Head of caudate nucleus (tissue), 42 donors: ENCODE measurements at regions of chr15 and their contacts with region 1.

Region 1: GRCh38 chr15:59372352-59373211 is at the start of gene MYO1E:
- DNase-seq: peak; percentile 75 to 97 (median 93)

Region 2: DNA sequence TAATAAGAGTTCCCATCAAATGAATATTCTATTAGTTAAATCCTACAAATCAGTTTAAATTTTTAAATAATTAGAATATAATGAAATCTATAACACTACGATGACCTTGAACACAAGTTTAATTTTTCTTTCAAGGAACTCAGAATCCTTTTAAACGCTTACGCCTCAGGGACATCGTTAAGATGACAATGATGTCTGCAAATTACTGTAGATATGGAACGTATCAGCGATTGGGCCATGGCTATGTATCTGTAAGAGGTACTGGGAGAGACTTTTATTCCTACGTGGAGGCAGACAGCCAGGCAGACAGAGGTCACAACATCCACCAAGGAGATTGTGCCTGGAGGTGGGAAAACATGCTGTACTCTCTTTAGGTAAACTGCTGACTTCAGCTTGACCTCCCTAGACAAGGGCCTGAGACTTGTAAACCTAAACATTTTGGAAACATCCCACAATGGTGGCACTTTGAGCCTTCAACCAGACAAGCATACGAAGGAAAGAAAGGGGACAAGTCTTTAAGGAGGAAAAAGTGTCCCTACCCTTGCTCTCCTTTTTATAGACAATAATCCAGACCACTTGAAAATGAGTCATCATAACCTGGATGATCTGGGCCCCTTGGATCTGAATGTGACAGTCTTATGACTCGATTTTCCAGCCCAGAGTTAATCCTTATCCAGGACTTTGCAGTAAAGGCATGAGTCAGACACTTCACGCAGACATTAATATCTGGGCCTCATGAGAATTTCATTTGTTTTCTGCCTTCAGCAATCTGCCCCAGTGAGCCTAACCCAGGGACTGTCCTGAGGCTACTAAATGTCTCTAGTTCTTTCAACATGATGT is 172.7 kb before region 1 on chr15:
- intact Hi-C with region 1: loop called (anchors 10 kb)
- DNase-seq: no peak

Region 3: DNA sequence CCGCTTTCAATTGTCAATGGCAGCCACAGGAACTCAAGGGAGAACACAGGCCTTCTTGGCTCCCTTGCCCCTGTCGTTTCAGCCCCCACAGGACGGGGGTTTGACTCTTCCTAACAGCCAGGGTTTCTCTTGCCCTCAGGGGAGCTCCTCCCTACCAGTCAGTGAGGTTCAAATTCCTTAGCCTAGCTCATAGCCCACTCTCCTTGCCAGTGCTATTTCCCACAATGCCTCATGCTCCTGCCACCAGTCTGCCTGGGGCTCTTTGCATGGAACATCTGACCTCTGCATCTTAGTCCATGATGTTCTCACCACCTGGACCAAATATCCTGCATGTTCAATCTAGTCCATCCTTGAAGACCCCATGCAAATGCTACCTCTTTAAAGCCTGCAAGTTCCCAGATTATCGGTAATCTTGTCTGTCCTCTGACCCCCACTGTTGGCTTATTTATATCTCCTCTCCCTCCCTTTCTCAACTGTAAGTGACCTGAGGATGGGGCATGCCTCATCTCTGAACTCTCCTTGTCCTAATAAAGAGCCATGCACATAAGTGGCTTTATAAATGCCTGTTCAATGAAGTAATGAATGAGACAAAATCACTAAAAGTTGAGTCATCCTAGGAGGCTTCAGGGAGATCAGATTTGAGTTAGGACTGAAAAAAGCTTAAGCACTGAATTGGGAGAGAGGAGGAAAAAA is 77.9 kb before region 1 on chr15:
- intact Hi-C with region 1: loop called (anchors 5 kb)
- DNase-seq: no peak

Region 4: DNA sequence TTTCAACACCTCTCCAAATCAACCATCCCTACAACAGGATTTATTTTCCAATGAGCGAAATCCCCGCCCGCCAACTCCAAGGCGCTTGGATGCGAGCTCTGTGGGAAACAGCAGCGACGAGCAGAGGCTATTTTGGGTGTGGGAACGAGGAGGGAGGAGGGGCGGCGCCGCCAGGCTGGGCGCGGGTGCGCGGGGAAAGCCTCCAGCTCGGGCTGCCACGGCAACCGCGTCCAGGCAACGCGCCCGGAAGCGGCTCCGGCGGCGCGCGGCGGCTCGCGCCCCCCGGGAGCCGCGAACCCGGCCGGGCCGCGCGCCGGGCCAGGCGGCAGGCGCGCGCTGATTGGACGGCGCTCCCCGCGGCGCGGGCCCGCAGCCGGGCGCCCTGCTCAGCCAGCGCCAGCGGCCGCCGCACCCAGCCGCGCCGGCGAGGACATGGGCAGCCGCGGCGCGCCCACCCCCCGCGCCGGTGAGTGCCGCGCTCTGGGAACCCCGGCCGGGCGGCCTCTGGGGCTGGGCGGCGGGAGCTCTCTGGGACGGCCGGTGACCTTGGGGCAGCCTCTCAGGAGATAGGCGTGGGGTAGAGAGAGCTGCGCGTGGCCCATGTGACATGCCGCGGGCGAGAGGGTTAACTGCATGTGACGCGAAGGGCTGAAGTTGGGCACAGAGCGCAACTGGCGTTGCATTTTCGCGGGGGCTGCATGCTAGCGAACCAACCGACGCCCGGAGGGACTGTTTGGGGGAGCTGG is 65.4 kb after region 1 on chr15 and contains the start of gene FAM81A:
- intact Hi-C with region 1: loop called (anchors 10 kb)
- DNase-seq: peak; percentile 66 to 96 (median 88)

Region 5: DNA sequence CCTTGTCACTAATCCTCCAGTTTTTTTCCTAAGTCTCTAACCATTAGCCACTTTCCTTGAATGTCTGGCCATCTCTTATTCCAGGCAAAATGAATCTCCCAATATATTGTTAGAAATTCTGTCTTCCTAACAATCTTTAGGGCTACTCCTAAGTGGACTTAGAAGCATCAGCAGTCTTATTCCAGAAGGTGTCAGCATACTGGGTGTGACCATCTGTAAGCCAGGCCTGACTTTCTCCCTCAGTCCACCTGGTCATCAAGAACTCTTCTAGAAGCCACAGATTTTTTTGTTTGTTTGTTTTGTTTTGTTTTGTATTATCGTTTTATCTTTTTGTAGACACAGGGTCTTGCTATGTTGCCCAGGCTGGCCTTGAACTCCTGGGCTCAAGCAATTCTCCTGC is 133.3 kb after region 1 on chr15:
- intact Hi-C with region 1: no loop called
- DNase-seq: no peak